ENCODE measurements at regions of chr7 and their contacts with region 1.

Region 1: DNA sequence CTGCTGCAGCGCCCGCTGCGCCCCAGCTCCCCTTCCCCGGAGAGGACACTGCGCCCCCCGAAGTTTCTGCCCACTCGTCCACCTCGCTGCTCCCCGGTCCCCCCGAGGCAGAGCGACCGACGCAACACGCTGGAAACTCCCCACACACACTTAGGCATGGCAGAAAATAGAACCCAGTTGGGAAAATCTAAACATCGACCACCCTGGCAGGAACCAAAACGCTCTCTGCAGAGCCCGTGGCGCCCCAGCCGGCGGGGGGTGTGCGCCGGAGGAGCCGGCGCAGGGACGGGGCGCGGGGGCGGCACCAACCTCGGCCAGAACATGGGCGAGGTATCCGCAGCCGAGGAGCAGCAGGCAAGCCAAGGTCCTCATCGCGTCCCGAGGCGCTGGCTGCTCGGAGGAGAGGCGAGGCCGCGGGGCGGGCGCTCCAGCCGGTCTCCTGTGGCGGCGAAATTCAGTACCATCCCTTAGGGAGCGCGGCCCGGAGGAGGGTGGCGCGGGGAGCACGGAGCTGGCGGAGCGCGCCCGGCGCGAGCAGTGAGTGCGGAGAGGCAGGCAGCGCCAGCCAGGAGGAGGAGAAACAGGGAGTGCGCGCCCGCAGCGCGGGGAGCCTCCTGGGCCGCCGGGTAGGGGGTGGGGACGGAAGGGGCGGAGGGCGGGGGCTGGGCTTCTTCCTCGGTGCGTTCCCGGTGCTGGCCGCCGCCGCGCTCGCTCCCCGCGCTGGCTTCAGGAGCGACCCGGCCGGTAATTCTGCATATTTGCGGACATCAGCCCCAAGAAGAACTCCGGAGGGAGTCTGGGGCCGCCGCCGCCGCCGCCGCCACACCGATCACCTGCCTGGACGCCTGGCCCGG is 789 bp downstream of the PDGFA start:
- DNase-seq: no peak
- H3K4me3 ChIP-seq: peak overlapping the region; percentile 57 to 63
- H3K27ac ChIP-seq: peak overlapping the region; percentile 85
- H3K4me1 ChIP-seq: peaks cover 68% of the 10 kb centered on the region
- H3K27me3 ChIP-seq: peaks cover 7% of the 10 kb centered on the region
- CTCF ChIP-seq: no peak
- POLR2A ChIP-seq: peak in 1 of 2 donors; percentile 6

Region 2: GRCh38 chr7:332646-333392 is 186.0 kb before region 1 on chr7:
- intact Hi-C with region 1: loop called (anchors 5 kb)
- DNase-seq: no peak
- H3K4me3 ChIP-seq: peak overlapping the region; percentile 28 to 35
- H3K27ac ChIP-seq: peak overlapping the region; percentile 26
- H3K4me1 ChIP-seq: peaks cover 14% of the 10 kb centered on the region
- H3K27me3 ChIP-seq: no peaks in the 10 kb centered on the region
- CTCF ChIP-seq: peak; percentile 29 to 80 (median 62)
- POLR2A ChIP-seq: no peak

Region 3: GRCh38 chr7:774161-775109 is 255.6 kb after region 1 on chr7:
- intact Hi-C with region 1: loop called (anchors 5 kb)
- DNase-seq: no peak
- H3K4me3 ChIP-seq: no peak overlapping the region
- H3K27ac ChIP-seq: no peak overlapping the region
- H3K4me1 ChIP-seq: peaks cover 32% of the 10 kb centered on the region
- H3K27me3 ChIP-seq: no peaks in the 10 kb centered on the region
- CTCF ChIP-seq: peak; percentile 69 to 88 (median 82)
- POLR2A ChIP-seq: no peak

Region 4: DNA sequence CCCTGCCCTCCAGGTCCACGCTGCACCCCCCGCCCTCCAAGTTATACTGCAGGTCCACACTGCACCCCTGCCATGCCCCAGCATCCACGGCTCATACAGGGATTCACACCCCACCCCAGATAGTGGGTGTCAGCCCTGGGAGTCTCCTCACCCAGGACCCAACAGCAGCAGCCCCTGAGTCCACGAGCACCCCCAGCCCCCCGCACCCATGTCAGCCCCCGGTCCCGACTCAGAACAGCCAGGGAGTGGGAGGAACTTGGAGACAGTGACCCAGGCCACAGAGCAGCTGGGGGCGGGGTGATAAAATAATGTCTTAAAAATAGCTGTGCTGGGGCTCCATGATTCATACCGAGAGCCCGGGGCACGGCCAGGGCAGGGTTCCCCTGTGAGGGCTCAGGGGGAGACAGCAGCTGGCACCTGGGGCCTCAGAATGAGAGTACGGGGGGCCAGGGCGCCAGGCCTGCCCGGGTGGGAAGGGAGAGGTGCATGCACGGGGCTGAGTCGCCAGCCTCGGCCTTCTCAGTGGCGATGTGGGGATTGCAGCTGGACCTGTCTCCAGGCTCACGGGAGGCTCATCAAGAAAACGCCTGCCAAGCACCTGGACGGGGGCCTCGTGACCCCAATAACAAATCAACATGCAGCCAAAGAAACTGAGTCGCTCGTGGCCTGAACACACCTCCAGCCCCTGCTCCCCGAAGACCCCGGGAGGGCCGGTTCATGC is 405.8 kb after region 1 on chr7:
- intact Hi-C with region 1: no loop called
- DNase-seq: no peak
- H3K4me3 ChIP-seq: no peak overlapping the region
- H3K27ac ChIP-seq: peak overlapping the region; percentile 27
- H3K4me1 ChIP-seq: peaks cover 3% of the 10 kb centered on the region
- H3K27me3 ChIP-seq: no peaks in the 10 kb centered on the region
- CTCF ChIP-seq: no peak
- POLR2A ChIP-seq: no peak